GM12878 (cell line): ENCODE measurements at regions of chr3 and their contacts with region 1.

Region 1: GRCh38 chr3:116140100-116140689 is 305.1 kb downstream of the LSAMP start:
- DNase-seq: no peak
- ATAC-seq: peak; percentile 63
- H3K4me3 ChIP-seq: no peak overlapping the region
- H3K27ac ChIP-seq: no peak overlapping the region
- H3K4me1 ChIP-seq: no peaks in the 10 kb centered on the region
- H3K27me3 ChIP-seq: no peaks in the 10 kb centered on the region
- CTCF ChIP-seq: peak; percentile 69 to 78 (median 77)
- EP300 ChIP-seq: no peak
- POLR2A ChIP-seq: no peak
- RAD21 ChIP-seq: peak; percentile 87

Region 2: GRCh38 chr3:114205541-114205940 is 1934.7 kb before region 1 on chr3:
- CTCF ChIA-PET with region 1: no interaction called
- POLR2A ChIA-PET with region 1: no interaction called
- RAD21 ChIA-PET with region 1: no interaction called
- SMC1A ChIA-PET with region 1: no interaction called
- in situ Hi-C with region 1: no loop called
- intact Hi-C with region 1: no loop called
- DNase-seq: no peak
- ATAC-seq: no peak
- H3K4me3 ChIP-seq: no peak overlapping the region
- H3K27ac ChIP-seq: no peak overlapping the region
- H3K4me1 ChIP-seq: peaks cover 6% of the 10 kb centered on the region
- H3K27me3 ChIP-seq: no peaks in the 10 kb centered on the region; a peak in 2 of 4 replicates
- CTCF ChIP-seq: no peak
- EP300 ChIP-seq: no peak
- POLR2A ChIP-seq: no peak
- RAD21 ChIP-seq: no peak

Region 3: DNA sequence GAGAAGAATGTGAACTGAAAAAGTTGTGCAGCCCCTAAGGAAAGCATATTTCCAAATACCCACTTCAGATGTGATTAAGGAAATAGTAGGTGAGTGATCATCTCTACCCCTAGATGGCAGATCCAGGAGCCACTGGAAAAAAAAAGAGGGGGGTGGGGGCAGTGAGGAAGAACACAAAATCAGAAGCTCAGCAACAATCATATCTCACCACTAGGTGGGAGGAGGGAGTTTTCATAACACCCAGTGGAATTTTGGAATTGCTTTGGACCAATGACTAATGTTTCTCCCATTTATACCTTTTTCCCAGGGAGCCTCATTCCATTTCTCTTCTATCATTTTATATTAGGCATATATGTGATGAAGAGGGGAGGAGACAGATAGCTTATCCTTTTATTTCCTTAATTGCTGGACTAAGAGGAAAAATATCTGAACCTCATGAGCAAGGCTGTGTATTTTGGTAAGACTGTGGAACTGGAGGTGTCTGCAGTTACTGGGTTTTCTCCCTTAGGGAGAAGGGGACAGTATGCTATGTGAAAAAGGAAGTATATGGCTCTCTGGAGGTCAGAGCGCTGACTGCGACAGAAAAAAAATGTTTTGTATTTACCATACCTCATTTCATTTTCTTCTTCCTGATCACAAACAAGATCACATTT is 153.5 kb before region 1 on chr3:
- CTCF ChIA-PET with region 1: interaction called, 3 read pairs
- POLR2A ChIA-PET with region 1: no interaction called
- RAD21 ChIA-PET with region 1: interaction called, 3 read pairs
- SMC1A ChIA-PET with region 1: no interaction called
- in situ Hi-C with region 1: no loop called
- intact Hi-C with region 1: loop called (anchors 5 kb)
- DNase-seq: no peak
- ATAC-seq: peak; percentile 54
- H3K4me3 ChIP-seq: no peak overlapping the region
- H3K27ac ChIP-seq: no peak overlapping the region
- H3K4me1 ChIP-seq: no peaks in the 10 kb centered on the region
- H3K27me3 ChIP-seq: no peaks in the 10 kb centered on the region
- CTCF ChIP-seq: peak; percentile 41 to 47 (median 41); a peak in 5 of 6 replicates
- EP300 ChIP-seq: no peak
- POLR2A ChIP-seq: no peak
- RAD21 ChIP-seq: peak; percentile 56

Region 4: DNA sequence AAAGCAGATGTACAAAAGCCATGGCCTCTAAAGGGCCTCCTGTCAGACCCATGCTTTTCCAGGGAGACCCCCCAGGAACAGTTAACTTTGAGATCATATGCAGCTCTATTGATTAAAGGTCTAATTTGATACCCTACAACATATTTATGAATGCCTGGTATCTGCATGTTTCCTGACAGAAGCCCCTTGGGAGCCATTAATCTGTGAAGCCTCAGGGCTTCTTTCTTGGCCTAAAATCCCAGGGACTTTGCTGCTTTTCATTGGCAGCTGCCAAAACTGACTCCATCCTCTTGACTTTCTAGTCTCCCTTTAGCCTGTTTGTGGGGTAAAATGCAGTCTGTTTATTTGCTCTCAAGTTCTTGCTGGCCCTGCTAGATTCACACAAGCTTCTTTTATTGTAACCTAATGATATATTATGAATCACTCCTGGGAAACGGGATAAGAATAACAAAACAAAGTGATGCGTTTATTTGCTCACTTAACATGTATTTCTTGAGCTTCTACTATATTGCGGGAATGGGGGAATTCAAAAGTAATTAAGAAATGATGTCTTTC is 48.1 kb after region 1 on chr3:
- CTCF ChIA-PET with region 1: no interaction called
- POLR2A ChIA-PET with region 1: no interaction called
- RAD21 ChIA-PET with region 1: no interaction called
- SMC1A ChIA-PET with region 1: no interaction called
- in situ Hi-C with region 1: no loop called
- intact Hi-C with region 1: no loop called
- DNase-seq: no peak
- ATAC-seq: no peak
- H3K4me3 ChIP-seq: no peak overlapping the region
- H3K27ac ChIP-seq: no peak overlapping the region
- H3K4me1 ChIP-seq: no peaks in the 10 kb centered on the region
- H3K27me3 ChIP-seq: no peaks in the 10 kb centered on the region
- CTCF ChIP-seq: no peak
- EP300 ChIP-seq: no peak
- POLR2A ChIP-seq: no peak
- RAD21 ChIP-seq: no peak

Region 5: DNA sequence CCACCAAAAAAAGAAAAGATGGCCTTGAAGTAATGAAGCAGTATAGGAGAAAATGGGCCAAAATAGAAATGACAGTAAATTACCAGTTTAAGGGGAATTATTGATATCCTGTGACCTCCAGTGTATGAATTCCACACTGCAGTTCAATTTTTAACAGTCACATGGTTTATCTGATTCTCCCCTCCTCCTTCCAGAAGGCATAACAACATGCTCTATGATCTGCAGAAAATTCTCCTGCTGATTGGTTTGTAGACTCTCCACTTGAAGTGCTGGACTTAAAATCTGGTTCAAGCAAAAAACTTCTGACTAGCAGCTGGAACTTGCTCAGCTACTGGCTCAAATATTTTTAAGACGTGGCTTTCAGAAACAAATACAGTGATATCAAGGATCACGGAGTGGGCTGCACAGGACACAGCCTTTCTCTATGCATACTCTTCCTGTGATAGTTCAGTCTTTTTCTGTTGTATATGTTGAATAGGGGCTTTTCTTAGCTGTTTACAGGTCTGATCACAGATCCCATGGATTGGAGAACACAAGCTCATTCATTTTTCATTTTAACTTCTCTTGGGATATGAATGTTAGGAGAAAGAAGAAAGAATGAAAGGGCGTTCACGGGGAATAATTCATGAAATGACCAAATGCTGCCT is 93.6 kb after region 1 on chr3:
- CTCF ChIA-PET with region 1: no interaction called
- POLR2A ChIA-PET with region 1: interaction called, 10 read pairs
- RAD21 ChIA-PET with region 1: no interaction called
- SMC1A ChIA-PET with region 1: no interaction called
- in situ Hi-C with region 1: no loop called
- intact Hi-C with region 1: no loop called
- DNase-seq: no peak
- ATAC-seq: no peak
- H3K4me3 ChIP-seq: no peak overlapping the region
- H3K27ac ChIP-seq: no peak overlapping the region
- H3K4me1 ChIP-seq: no peaks in the 10 kb centered on the region
- H3K27me3 ChIP-seq: no peaks in the 10 kb centered on the region
- CTCF ChIP-seq: no peak
- EP300 ChIP-seq: no peak
- POLR2A ChIP-seq: no peak
- RAD21 ChIP-seq: no peak

Region 6: GRCh38 chr3:116288485-116288884 is 148.3 kb after region 1 on chr3:
- CTCF ChIA-PET with region 1: no interaction called
- POLR2A ChIA-PET with region 1: no interaction called
- RAD21 ChIA-PET with region 1: no interaction called
- SMC1A ChIA-PET with region 1: no interaction called
- in situ Hi-C with region 1: no loop called
- intact Hi-C with region 1: loop called (anchors 1 kb)
- DNase-seq: peak; percentile 34
- ATAC-seq: peak; percentile 87
- H3K4me3 ChIP-seq: no peak overlapping the region
- H3K27ac ChIP-seq: no peak overlapping the region
- H3K4me1 ChIP-seq: no peaks in the 10 kb centered on the region
- H3K27me3 ChIP-seq: no peaks in the 10 kb centered on the region; a peak in 1 of 4 replicates
- CTCF ChIP-seq: no peak
- EP300 ChIP-seq: peak; percentile 47 to 60; a peak in 2 of 4 replicates
- POLR2A ChIP-seq: no peak
- RAD21 ChIP-seq: no peak

Region 7: GRCh38 chr3:116453666-116454346 is 313.6 kb after region 1 on chr3:
- CTCF ChIA-PET with region 1: interaction called, 5 read pairs
- POLR2A ChIA-PET with region 1: no interaction called
- RAD21 ChIA-PET with region 1: no interaction called
- SMC1A ChIA-PET with region 1: interaction called, 4 read pairs
- in situ Hi-C with region 1: no loop called
- intact Hi-C with region 1: loop called (anchors 5 kb)
- DNase-seq: no peak
- ATAC-seq: no peak
- H3K4me3 ChIP-seq: no peak overlapping the region
- H3K27ac ChIP-seq: no peak overlapping the region
- H3K4me1 ChIP-seq: no peaks in the 10 kb centered on the region
- H3K27me3 ChIP-seq: no peaks in the 10 kb centered on the region
- CTCF ChIP-seq: no peak; a peak in 2 of 6 replicates
- EP300 ChIP-seq: no peak
- POLR2A ChIP-seq: no peak
- RAD21 ChIP-seq: no peak

Region 8: GRCh38 chr3:116470605-116471197 is 330.5 kb after region 1 on chr3:
- CTCF ChIA-PET with region 1: no interaction called
- POLR2A ChIA-PET with region 1: no interaction called
- RAD21 ChIA-PET with region 1: no interaction called
- SMC1A ChIA-PET with region 1: no interaction called
- in situ Hi-C with region 1: no loop called
- intact Hi-C with region 1: no loop called
- DNase-seq: no peak
- ATAC-seq: no peak
- H3K4me3 ChIP-seq: no peak overlapping the region
- H3K27ac ChIP-seq: no peak overlapping the region
- H3K4me1 ChIP-seq: no peaks in the 10 kb centered on the region
- H3K27me3 ChIP-seq: no peaks in the 10 kb centered on the region
- CTCF ChIP-seq: no peak
- EP300 ChIP-seq: no peak
- POLR2A ChIP-seq: no peak
- RAD21 ChIP-seq: no peak

Region 9: GRCh38 chr3:116517308-116517707 is 377.1 kb after region 1 on chr3:
- CTCF ChIA-PET with region 1: interaction called, 5 read pairs
- POLR2A ChIA-PET with region 1: no interaction called
- RAD21 ChIA-PET with region 1: interaction called, 4 read pairs
- SMC1A ChIA-PET with region 1: no interaction called
- in situ Hi-C with region 1: no loop called
- intact Hi-C with region 1: loop called (anchors 2 kb)
- DNase-seq: no peak
- ATAC-seq: peak; percentile 73
- H3K4me3 ChIP-seq: no peak overlapping the region
- H3K27ac ChIP-seq: no peak overlapping the region
- H3K4me1 ChIP-seq: no peaks in the 10 kb centered on the region
- H3K27me3 ChIP-seq: no peaks in the 10 kb centered on the region
- CTCF ChIP-seq: peak; percentile 29 to 42 (median 35); a peak in 4 of 6 replicates
- EP300 ChIP-seq: no peak
- POLR2A ChIP-seq: no peak
- RAD21 ChIP-seq: 0 out of 2 replicates have a peak, but pooled peaks have one; percentile 30

Region 10: DNA sequence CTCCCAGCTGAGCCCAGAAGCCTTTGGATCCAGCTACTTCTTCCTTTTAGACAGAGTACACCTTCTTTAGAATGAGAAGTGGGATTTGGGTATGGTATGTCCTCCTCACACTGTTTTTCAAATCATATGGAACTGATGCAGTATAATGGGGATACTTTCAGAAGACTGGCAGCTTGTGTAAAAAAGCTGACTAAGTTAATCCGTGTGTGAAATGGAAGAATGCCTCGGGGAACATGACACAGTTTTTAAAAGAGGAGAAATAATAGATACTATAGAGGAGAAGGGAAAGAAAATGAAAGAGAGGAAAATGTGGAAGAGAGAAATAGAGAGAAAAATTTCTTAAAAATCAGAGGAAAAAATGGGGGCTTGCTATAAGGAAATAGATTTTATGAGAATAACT is 617.1 kb after region 1 on chr3:
- CTCF ChIA-PET with region 1: no interaction called
- POLR2A ChIA-PET with region 1: no interaction called
- RAD21 ChIA-PET with region 1: no interaction called
- SMC1A ChIA-PET with region 1: no interaction called
- in situ Hi-C with region 1: loop called (anchors 5 kb)
- intact Hi-C with region 1: loop called (anchors 1 kb)
- DNase-seq: no peak
- ATAC-seq: no peak
- H3K4me3 ChIP-seq: no peak overlapping the region
- H3K27ac ChIP-seq: no peak overlapping the region
- H3K4me1 ChIP-seq: no peaks in the 10 kb centered on the region
- H3K27me3 ChIP-seq: no peaks in the 10 kb centered on the region
- CTCF ChIP-seq: no peak
- EP300 ChIP-seq: no peak
- POLR2A ChIP-seq: no peak
- RAD21 ChIP-seq: no peak